Caco-2 (cell line): ENCODE measurements at regions of chr2 and their contacts with region 1.

Region 1: DNA sequence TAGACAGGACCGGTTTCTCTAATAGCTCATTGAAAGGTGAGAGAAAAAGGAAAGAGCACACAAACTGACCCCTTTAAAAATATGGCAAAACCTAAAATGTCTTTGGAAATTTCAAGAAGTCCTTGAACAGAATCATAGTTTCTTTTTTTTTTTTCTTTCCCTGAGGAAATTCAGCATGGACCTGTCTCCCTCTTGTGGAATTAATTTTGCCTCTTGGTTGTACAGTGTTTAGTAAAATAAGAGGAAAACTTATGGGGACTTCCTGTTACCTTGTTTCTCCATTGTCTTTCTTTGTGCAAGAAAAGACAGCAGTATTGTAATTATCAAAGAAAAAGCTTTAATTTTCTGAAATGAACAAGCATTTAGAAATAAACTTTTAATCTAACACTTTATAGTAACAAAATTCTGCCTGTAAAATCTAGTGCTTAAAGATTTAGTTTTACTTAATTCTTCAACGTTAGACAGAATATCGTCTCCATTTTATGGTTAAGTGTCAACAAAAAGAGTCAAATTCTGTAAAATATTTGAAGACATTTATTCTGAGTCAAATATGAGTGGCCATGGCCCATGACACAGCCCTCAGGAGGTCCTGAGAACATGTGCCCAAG is 176.3 kb upstream of the NABP1 start:
- DNase-seq: peak in 1 of 2 experiments; percentile 34
- H3K4me3 ChIP-seq: no peak overlapping the region
- H3K4me3 Mint-ChIP-seq: no peak overlapping the region
- H3K27ac Mint-ChIP-seq: no peak overlapping the region
- H3K4me1 ChIP-seq: peaks cover 10% of the 10 kb centered on the region
- H3K4me1 Mint-ChIP-seq: no peaks in the 10 kb centered on the region
- H3K27me3 ChIP-seq: no peaks in the 10 kb centered on the region
- H3K27me3 Mint-ChIP-seq: no peaks in the 10 kb centered on the region
- CTCF ChIP-seq: peak; percentile 44 to 45

Region 2: GRCh38 chr2:191051825-191052778 is 449.6 kb before region 1 on chr2:
- CTCF ChIA-PET with region 1: interaction called, 3 read pairs
- POLR2A ChIA-PET with region 1: no interaction called
- intact Hi-C with region 1: loop called (anchors 5 kb)
- DNase-seq: peak in 1 of 2 experiments; percentile 44
- H3K4me3 ChIP-seq: no peak overlapping the region
- H3K4me3 Mint-ChIP-seq: no peak overlapping the region
- H3K27ac Mint-ChIP-seq: no peak overlapping the region
- H3K4me1 ChIP-seq: peaks cover 14% of the 10 kb centered on the region
- H3K4me1 Mint-ChIP-seq: no peaks in the 10 kb centered on the region
- H3K27me3 ChIP-seq: no peaks in the 10 kb centered on the region
- H3K27me3 Mint-ChIP-seq: peaks cover 6% of the 10 kb centered on the region
- CTCF ChIP-seq: peak; percentile 61

Region 3: GRCh38 chr2:191218292-191218898 is 283.3 kb before region 1 on chr2:
- CTCF ChIA-PET with region 1: no interaction called
- POLR2A ChIA-PET with region 1: no interaction called
- intact Hi-C with region 1: loop called (anchors 1 kb)
- DNase-seq: peak; percentile 63 to 65
- H3K4me3 ChIP-seq: no peak overlapping the region
- H3K4me3 Mint-ChIP-seq: no peak overlapping the region
- H3K27ac Mint-ChIP-seq: no peak overlapping the region
- H3K4me1 ChIP-seq: peaks cover 27% of the 10 kb centered on the region
- H3K4me1 Mint-ChIP-seq: peaks cover 15% of the 10 kb centered on the region
- H3K27me3 ChIP-seq: no peaks in the 10 kb centered on the region
- H3K27me3 Mint-ChIP-seq: no peaks in the 10 kb centered on the region
- CTCF ChIP-seq: peak; percentile 55 to 61

Region 4: DNA sequence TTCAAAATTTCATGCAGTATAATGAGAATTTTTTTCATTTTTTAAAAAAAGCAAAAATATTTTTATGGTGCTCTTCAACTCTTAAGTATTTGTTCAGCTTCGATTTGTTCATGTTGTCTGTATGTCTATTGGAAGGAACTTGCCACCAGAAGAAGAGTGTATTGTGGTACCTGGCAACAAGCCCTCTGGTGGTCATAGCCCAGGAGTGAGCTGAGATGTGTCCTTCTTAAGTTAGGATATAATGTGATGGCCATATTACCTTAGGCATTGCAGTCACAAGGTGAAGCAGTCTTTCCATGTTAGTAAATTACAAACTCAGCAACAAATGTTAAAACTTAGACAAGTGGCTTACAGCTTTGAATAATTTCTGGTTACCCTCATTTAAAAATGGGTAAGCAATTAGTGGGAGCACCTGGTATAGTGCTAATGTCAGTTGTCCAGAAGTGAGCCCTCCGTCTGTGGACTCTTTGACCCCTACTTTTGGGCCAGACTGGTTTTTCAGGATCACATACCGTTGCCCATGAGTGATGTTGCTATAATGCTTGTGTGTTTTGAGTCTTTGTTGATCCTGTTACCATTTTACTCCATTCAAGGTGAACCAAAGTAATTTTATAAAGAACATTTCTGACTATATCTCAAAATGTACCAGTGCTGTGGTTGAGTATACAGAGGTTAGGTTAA is 199.1 kb before region 1 on chr2:
- CTCF ChIA-PET with region 1: no interaction called
- POLR2A ChIA-PET with region 1: no interaction called
- intact Hi-C with region 1: loop called (anchors 1 kb)
- DNase-seq: peak; percentile 56 to 59
- H3K4me3 ChIP-seq: no peak overlapping the region
- H3K4me3 Mint-ChIP-seq: no peak overlapping the region
- H3K27ac Mint-ChIP-seq: peak overlapping the region; percentile 18
- H3K4me1 ChIP-seq: peaks cover 26% of the 10 kb centered on the region
- H3K4me1 Mint-ChIP-seq: peaks cover 37% of the 10 kb centered on the region
- H3K27me3 ChIP-seq: no peaks in the 10 kb centered on the region
- H3K27me3 Mint-ChIP-seq: no peaks in the 10 kb centered on the region
- CTCF ChIP-seq: peak; percentile 58 to 65

Region 5: DNA sequence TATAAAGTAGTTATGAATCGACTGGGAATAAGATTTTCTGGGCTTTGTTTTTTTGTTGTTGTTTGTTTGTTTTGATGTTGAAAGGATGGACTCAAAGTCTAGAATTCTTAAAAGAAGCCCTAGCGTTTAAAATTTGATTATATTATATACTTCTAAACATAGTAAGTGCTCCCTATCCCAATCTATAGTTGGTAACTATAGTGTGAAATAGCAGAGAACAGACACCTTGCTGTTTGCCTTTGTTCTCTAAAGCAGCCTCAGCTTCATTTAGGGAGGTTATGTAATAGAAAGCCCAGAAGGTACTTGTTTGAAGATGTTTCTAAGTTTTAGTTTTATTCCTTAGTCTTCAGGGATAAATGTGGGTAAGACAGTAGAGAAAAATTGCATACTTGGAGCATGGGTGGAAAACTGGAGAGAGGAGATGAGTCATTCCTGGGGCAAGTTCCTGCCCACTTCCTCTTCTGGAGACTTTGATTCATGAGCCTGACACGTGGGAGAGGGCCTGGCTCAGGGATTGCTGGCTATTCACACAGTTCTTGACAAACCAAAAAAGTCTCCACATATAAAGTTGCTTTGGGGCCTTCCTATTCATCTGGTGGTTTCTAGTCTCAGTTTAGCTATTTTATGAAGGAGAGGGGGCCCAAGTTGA is 124.6 kb before region 1 on chr2:
- CTCF ChIA-PET with region 1: no interaction called
- POLR2A ChIA-PET with region 1: no interaction called
- intact Hi-C with region 1: loop called (anchors 1 kb)
- DNase-seq: peak; percentile 44 to 63
- H3K4me3 ChIP-seq: no peak overlapping the region
- H3K4me3 Mint-ChIP-seq: no peak overlapping the region
- H3K27ac Mint-ChIP-seq: peak overlapping the region; percentile 36
- H3K4me1 ChIP-seq: peaks cover 21% of the 10 kb centered on the region; the same call in 1 of the 2 replicates
- H3K4me1 Mint-ChIP-seq: peaks cover 12% of the 10 kb centered on the region
- H3K27me3 ChIP-seq: no peaks in the 10 kb centered on the region
- H3K27me3 Mint-ChIP-seq: no peaks in the 10 kb centered on the region
- CTCF ChIP-seq: no peak

Region 6: GRCh38 chr2:191401287-191401686 is 100.4 kb before region 1 on chr2:
- CTCF ChIA-PET with region 1: no interaction called
- POLR2A ChIA-PET with region 1: no interaction called
- intact Hi-C with region 1: loop called (anchors 5 kb)
- DNase-seq: peak in 1 of 2 experiments; percentile 43
- H3K4me3 ChIP-seq: no peak overlapping the region
- H3K4me3 Mint-ChIP-seq: peak overlapping the region; percentile 16
- H3K27ac Mint-ChIP-seq: peak overlapping the region; percentile 44
- H3K4me1 ChIP-seq: peaks cover 71% of the 10 kb centered on the region
- H3K4me1 Mint-ChIP-seq: peaks cover 36% of the 10 kb centered on the region
- H3K27me3 ChIP-seq: no peaks in the 10 kb centered on the region
- H3K27me3 Mint-ChIP-seq: no peaks in the 10 kb centered on the region
- CTCF ChIP-seq: no peak

Region 7: GRCh38 chr2:191758518-191759507 is 257.1 kb after region 1 on chr2:
- CTCF ChIA-PET with region 1: no interaction called
- POLR2A ChIA-PET with region 1: no interaction called
- intact Hi-C with region 1: no loop called
- DNase-seq: peak; percentile 75 to 77
- H3K4me3 ChIP-seq: no peak overlapping the region
- H3K4me3 Mint-ChIP-seq: no peak overlapping the region
- H3K27ac Mint-ChIP-seq: no peak overlapping the region
- H3K4me1 ChIP-seq: 0 out of 2 replicates have a peak, but pooled peaks cover 6% of the 10 kb centered on the region
- H3K4me1 Mint-ChIP-seq: no peaks in the 10 kb centered on the region
- H3K27me3 ChIP-seq: no peaks in the 10 kb centered on the region
- H3K27me3 Mint-ChIP-seq: no peaks in the 10 kb centered on the region
- CTCF ChIP-seq: peak; percentile 63 to 89